GM12878 (cell line): ENCODE measurements at regions of chr10 and their contacts with region 1.

Region 1: GRCh38 chr10:17984056-17984455 is 32.3 kb downstream of the SLC39A12 start:
- DNase-seq: peak; percentile 55
- ATAC-seq: peak; percentile 92
- H3K4me3 ChIP-seq: no peak overlapping the region
- H3K27ac ChIP-seq: no peak overlapping the region
- H3K4me1 ChIP-seq: no peaks in the 10 kb centered on the region
- H3K27me3 ChIP-seq: no peaks in the 10 kb centered on the region
- CTCF ChIP-seq: no peak
- EP300 ChIP-seq: peak; percentile 63 to 79; a peak in 3 of 4 replicates
- POLR2A ChIP-seq: no peak
- RAD21 ChIP-seq: no peak

Region 2: DNA sequence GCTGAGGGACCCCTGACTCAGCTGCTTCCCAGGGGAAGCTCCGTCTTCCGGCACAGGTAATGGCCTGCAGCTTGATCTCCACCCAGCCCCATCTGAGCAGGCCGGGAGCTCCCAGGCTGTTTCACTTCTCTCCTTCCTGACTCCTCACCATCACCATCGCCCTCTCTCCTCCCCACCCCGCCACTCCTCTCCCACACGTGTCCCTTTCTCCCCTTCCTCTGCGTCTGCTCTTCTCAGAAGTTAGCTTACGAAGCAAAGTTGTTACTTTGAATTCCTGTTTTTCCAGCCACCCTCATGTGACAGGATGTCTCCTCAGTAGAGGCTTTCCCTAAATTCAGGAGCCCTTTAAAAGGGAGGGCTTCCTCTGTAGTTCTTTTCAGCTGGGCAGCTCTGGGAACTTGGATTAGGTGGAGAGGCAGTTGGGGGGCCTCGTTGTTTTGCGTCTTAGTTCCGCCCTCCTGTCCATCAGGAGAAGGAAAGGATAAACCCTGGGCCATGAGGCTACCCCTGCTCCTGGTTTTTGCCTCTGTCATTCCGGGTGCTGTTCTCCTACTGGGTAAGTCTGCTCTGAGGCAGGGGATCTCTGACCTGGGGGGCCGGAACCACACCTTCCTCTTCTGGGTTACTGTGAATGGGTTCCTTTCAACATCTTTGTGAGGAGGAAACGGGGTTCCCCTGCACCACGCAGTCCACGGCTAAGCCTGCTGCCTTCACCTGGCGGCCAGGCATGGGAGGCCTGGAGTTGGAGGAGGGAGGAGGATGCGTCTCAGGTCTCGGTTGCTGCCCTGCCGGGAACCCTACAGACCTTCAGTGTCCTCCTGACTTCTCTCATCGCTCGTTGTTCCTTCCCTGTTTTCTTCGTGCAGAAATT is 174.8 kb before region 1 on chr10 and contains the start of gene MRC1:
- CTCF ChIA-PET with region 1: no interaction called
- POLR2A ChIA-PET with region 1: no interaction called
- RAD21 ChIA-PET with region 1: no interaction called
- SMC1A ChIA-PET with region 1: no interaction called
- in situ Hi-C with region 1: no loop called
- intact Hi-C with region 1: no loop called
- DNase-seq: no peak
- ATAC-seq: peak; percentile 31; the same call in 2 of the 3 replicates
- H3K4me3 ChIP-seq: no peak within 1 kb of the TSS
- H3K27ac ChIP-seq: no peak within 1 kb of the TSS
- H3K4me1 ChIP-seq: no peaks in the 10 kb centered on the region
- H3K27me3 ChIP-seq: peaks cover 0 to 5% of the 10 kb centered on the region in 2 experiments; a peak in 2 of 4 replicates
- CTCF ChIP-seq: no peak
- EP300 ChIP-seq: no peak
- POLR2A ChIP-seq: no peak
- RAD21 ChIP-seq: no peak
- polyA plus RNA-seq, gene MRC1: 0.02 TPM in 1 of 2 experiments, not detected in the other

Region 3: GRCh38 chr10:17847585-17848296 is 136.3 kb before region 1 on chr10:
- CTCF ChIA-PET with region 1: no interaction called
- POLR2A ChIA-PET with region 1: no interaction called
- RAD21 ChIA-PET with region 1: no interaction called
- SMC1A ChIA-PET with region 1: no interaction called
- in situ Hi-C with region 1: no loop called
- intact Hi-C with region 1: loop called (anchors 5 kb)
- DNase-seq: no peak
- ATAC-seq: peak; percentile 88
- H3K4me3 ChIP-seq: no peak overlapping the region
- H3K27ac ChIP-seq: no peak overlapping the region
- H3K4me1 ChIP-seq: no peaks in the 10 kb centered on the region
- H3K27me3 ChIP-seq: no peaks in the 10 kb centered on the region; a peak in 1 of 4 replicates
- CTCF ChIP-seq: peak; percentile 14 to 53 (median 38); a peak in 4 of 6 replicates
- EP300 ChIP-seq: no peak
- POLR2A ChIP-seq: no peak
- RAD21 ChIP-seq: peak; percentile 70